BJ (cell line): ENCODE measurements at regions of chr7 and their contacts with region 1.

Region 1: GRCh38 chr7:29408841-29409243 is 154.8 kb upstream of the PRR15 start:
- DNase-seq: peak; percentile 70
- H3K4me3 ChIP-seq: no peak overlapping the region
- H3K27me3 ChIP-seq: no peaks in the 10 kb centered on the region; the same call in 1 of the 2 replicates
- CTCF ChIP-seq: peak; percentile 75

Region 2: GRCh38 chr7:29421010-29421956 is 12.4 kb after region 1 on chr7:
- CTCF ChIA-PET with region 1: interaction called, 12 read pairs
- POLR2A ChIA-PET with region 1: no interaction called
- DNase-seq: no peak
- H3K4me3 ChIP-seq: no peak overlapping the region
- H3K27me3 ChIP-seq: no peaks in the 10 kb centered on the region
- CTCF ChIP-seq: no peak